Activated CD4-positive, alpha-beta T cell treated with anti-CD3 and anti-CD28 coated beads for 36 hours (primary cell): ENCODE measurements at regions of chr13 and their contacts with region 1.

Region 1: GRCh38 chr13:62019858-62020257 is 604.2 kb upstream of the PCDH20 start:
- DNase-seq: no peak
- ATAC-seq: no peak
- H3K4me3 Mint-ChIP-seq: no peak overlapping the region
- H3K27ac Mint-ChIP-seq: no peak overlapping the region
- H3K4me1 Mint-ChIP-seq: no peaks in the 10 kb centered on the region
- H3K27me3 Mint-ChIP-seq: no peaks in the 10 kb centered on the region

Region 2: DNA sequence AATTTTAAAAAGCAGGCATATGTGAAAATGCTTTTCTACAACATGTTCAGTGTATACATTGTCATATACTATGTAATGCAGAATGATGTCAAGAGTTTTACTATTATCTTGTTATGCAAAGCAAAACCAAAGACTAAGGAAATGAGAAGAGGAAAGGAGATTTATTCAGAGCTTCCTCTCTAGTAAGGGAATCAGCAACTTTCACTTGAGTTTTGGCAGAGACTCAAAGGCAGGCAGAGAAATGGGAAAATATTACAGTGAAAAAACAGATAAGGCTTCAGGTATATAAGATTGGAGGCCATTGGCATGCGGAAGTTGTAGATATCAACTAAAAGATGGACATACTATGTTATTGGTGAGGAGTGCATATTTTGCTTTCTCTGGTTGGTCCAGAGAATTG is 92.2 kb before region 1 on chr13:
- CTCF ChIA-PET with region 1: no interaction called
- POLR2A ChIA-PET with region 1: no interaction called
- intact Hi-C with region 1: no loop called
- DNase-seq: no peak
- ATAC-seq: no peak
- H3K4me3 Mint-ChIP-seq: no peak overlapping the region
- H3K27ac Mint-ChIP-seq: no peak overlapping the region
- H3K4me1 Mint-ChIP-seq: no peaks in the 10 kb centered on the region
- H3K27me3 Mint-ChIP-seq: no peaks in the 10 kb centered on the region

Region 3: DNA sequence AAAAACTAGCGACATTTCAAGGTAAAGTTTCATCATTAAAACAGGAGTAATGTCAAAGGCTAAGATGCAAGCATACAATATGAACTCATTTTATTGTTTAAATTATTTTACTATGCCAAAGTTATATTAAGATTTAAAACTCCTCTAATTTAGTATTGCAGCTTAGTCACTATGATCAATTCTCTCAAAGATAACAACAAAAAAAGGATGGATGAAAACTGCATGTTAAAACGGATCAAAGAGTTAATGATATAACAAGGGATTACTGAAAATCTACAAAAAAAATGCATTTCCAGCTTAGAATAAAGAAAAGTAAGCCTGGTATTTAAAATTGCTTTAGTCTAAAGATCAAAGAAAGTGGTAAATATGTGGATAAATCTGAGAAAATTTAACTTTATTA is 16.4 kb before region 1 on chr13:
- CTCF ChIA-PET with region 1: no interaction called
- POLR2A ChIA-PET with region 1: no interaction called
- intact Hi-C with region 1: no loop called
- DNase-seq: no peak
- ATAC-seq: no peak
- H3K4me3 Mint-ChIP-seq: no peak overlapping the region
- H3K27ac Mint-ChIP-seq: no peak overlapping the region
- H3K4me1 Mint-ChIP-seq: no peaks in the 10 kb centered on the region
- H3K27me3 Mint-ChIP-seq: no peaks in the 10 kb centered on the region

Region 4: DNA sequence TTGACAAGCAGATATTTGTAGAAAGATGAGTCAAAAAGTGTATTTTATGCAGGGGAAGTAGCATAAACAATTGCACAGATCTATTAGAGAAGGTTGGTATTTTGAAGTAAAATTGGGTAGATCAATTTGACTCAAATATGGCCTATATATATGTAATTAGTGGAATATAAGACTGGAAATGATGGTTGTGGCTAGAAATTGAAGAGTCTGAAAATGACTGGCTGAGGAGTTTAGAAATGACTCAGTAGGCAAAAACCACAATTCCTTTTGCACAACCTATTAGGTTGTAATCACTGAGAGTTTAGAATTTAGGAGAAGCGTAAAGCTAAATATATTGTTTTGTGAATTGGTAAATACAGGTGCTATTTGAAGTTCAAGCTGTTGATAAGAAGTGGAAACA is 18.4 kb after region 1 on chr13:
- CTCF ChIA-PET with region 1: no interaction called
- POLR2A ChIA-PET with region 1: no interaction called
- intact Hi-C with region 1: loop called in 1 of 2 experiments (anchors 1 kb)
- DNase-seq: no peak
- ATAC-seq: no peak
- H3K4me3 Mint-ChIP-seq: no peak overlapping the region
- H3K27ac Mint-ChIP-seq: no peak overlapping the region
- H3K4me1 Mint-ChIP-seq: no peaks in the 10 kb centered on the region
- H3K27me3 Mint-ChIP-seq: no peaks in the 10 kb centered on the region